Left ventricle myocardium inferior (tissue), 1 donor: ENCODE measurements at regions of chr1 and their contacts with region 1.

Region 1: DNA sequence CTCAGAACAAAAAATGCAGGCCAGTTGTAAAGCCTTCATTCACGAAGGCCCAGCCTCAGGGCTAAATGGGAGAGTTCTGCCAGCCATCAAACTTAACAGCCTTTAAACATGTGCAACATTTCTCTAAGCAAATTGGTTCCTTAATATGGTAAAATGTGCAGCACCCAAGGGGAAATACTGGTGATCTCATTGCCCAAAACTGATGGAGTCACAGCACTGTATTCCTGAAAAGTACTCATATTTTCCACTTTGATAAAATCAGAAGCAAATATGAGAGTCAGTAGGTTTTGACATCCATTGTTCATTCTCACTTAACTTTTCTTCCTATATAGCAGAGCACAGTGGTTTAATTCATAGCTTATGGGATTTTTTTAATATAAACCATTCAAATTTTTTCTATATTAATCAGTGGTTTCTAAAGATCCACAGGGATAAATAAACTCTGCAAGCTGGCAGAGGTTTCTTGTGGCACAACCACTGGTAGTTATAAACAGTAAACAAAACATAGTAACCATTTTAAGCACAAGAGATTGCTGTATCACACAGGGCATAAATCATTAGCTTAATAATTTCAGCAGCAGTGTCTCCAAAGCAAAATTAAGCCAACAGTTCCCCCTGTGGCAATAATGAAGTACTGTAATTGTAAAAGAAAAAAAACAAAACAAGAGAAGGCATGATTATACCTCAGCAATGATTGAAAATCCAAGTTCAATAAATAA is 106.9 kb upstream of the LYPLAL1 start:
- DNase-seq: no peak
- H3K4me3 ChIP-seq: no peak overlapping the region
- H3K27ac ChIP-seq: no peak overlapping the region
- H3K4me1 ChIP-seq: peaks cover 13% of the 10 kb centered on the region
- H3K27me3 ChIP-seq: no peaks in the 10 kb centered on the region
- CTCF ChIP-seq: peak; percentile 65

Region 2: DNA sequence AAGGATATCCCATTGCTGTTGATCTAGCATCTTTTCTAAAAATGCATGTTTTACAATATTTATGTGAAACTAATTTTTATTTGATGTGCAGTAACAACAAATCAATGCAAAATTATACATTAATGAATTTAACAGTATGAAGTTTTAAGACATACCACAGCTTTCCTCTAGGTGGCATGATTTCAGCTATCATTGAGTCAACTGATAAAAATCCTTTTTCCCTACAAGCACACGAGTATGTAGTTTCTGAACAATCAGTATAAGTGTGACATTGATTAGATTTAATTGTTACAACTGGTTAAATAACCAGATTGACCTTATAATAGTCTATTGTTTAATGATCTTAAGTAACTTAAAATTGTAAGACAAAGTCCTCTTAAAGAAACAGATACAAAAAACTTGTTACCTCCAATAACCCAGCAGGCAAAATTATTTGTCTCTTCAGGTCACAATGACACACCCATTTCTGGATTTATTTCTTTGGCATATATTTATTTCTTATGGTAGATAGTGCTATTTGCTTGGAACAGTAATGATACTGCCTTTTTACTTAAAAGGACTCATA is 727.4 kb before region 1 on chr1:
- intact Hi-C with region 1: loop called (anchors 5 kb)
- DNase-seq: no peak
- H3K4me3 ChIP-seq: no peak overlapping the region
- H3K27ac ChIP-seq: no peak overlapping the region
- H3K4me1 ChIP-seq: no peaks in the 10 kb centered on the region
- H3K27me3 ChIP-seq: no peaks in the 10 kb centered on the region
- CTCF ChIP-seq: peak; percentile 81

Region 3: GRCh38 chr1:218705911-218706893 is 360.6 kb before region 1 on chr1:
- intact Hi-C with region 1: no loop called
- DNase-seq: no peak
- H3K4me3 ChIP-seq: no peak overlapping the region
- H3K27ac ChIP-seq: no peak overlapping the region
- H3K4me1 ChIP-seq: no peaks in the 10 kb centered on the region
- H3K27me3 ChIP-seq: no peaks in the 10 kb centered on the region
- CTCF ChIP-seq: no peak